Astrocyte of the spinal cord (primary cell): ENCODE measurements at regions of chr5 and their contacts with region 1.

Region 1: DNA sequence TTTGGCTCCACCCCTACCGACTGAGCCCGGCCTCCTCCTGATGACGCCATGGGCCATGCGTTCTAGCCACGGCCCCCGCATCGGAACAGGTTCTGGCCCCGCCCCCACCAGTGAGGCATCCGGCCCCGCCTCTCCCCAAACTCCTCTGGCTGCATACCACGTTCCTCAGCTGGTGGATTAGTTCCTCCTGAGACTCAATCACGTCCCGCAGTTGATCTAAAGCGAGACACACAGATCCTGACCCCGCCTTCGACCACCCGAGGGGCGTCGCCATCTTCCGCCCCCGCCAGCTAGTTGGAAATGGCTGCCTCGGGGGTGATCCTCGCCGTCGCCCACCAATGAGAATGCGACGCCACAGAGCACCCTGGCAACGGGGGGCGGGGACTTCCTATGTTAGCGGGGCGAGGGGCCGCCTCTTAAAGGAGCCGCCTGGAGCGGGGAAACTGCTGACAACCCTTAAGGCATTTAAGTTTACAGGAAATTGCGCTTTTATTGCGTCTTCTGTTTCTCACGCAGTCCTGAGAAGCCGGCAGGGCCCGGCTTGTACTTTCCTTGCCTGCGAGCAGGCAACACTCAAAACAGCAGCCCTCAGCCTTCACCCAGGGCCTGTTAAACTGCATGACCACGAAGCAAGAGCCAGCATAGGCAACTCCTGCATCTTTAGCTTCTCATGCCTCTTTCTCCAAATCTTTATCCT is at the start of gene SPATA24:
- DNase-seq: peak; percentile 99
- H3K4me3 ChIP-seq: peak within 1 kb of the TSS; percentile 63
- CTCF ChIP-seq: no peak

Region 2: DNA sequence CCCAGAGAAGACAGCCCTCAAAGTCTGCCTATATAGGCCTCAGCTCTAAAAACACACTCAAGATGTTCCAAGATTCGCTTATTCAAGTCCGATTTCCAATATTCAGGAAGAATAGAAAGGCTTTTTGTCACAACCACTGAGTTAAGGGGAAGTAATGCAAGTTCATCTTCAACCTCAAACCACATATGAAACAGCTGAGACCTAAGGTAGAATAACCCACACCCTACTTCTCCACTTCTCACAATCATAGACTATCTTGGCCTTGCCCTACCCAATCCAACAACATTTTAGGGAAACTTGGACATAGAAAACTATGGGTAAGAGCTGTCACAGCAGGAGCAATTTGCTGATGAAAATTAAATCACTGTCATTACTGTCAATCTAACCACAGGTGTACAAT is 376.8 kb before region 1 on chr5:
- in situ Hi-C with region 1: no loop called
- DNase-seq: no peak
- H3K4me3 ChIP-seq: no peak overlapping the region
- CTCF ChIP-seq: no peak

Region 3: DNA sequence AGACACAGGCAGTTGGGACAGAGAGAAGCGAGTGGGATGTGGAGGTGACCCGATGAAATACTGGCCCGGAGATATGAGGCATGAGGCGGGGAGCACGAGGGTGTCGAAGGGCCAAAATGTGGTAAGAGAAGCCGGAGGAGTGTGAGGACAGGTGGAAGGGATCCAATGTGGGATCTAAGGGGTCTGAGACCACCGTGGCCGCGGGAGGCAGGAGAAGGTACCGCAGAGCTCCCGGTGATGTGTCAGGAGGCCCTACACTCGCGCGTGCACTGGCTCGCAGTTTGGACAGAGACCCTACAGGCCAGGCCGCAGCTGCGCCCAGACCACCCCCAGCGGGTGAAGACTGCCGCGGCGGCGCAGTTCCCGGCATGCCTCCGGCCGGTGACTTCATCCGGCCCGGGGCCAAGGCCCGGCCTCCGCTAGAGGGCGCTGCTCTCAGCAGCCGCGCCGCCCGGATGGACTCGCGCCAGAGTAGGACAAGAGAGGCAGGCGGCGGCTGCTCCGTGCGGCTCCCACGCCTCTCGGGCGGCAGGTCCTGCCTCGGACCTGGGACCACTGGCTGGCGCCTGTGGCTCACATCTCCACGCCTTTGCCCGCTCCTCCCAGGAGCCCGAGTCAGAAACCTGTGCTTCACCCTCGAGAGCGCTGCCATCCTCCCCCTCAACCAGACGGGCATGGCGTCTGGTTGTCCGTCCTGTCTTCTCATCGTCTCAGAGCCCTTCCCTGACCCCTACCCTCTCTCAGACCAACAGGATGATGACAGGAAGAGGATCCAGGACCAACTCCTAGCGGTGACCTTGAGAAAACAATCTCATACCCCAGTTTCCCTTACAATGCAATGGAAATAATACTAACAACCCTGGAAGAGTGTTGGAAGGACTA is 114.0 kb after region 1 on chr5:
- in situ Hi-C with region 1: loop called (anchors 25 kb)
- DNase-seq: peak; percentile 89
- H3K4me3 ChIP-seq: peak overlapping the region; percentile 50
- CTCF ChIP-seq: peak; percentile 88

Region 4: GRCh38 chr5:139765409-139766217 is 361.7 kb after region 1 on chr5:
- in situ Hi-C with region 1: no loop called
- DNase-seq: peak; percentile 73
- H3K4me3 ChIP-seq: peak overlapping the region; percentile 56
- CTCF ChIP-seq: peak; percentile 81